Panc1 (cell line): ENCODE measurements at regions of chr11 and their contacts with region 1.

Region 1: DNA sequence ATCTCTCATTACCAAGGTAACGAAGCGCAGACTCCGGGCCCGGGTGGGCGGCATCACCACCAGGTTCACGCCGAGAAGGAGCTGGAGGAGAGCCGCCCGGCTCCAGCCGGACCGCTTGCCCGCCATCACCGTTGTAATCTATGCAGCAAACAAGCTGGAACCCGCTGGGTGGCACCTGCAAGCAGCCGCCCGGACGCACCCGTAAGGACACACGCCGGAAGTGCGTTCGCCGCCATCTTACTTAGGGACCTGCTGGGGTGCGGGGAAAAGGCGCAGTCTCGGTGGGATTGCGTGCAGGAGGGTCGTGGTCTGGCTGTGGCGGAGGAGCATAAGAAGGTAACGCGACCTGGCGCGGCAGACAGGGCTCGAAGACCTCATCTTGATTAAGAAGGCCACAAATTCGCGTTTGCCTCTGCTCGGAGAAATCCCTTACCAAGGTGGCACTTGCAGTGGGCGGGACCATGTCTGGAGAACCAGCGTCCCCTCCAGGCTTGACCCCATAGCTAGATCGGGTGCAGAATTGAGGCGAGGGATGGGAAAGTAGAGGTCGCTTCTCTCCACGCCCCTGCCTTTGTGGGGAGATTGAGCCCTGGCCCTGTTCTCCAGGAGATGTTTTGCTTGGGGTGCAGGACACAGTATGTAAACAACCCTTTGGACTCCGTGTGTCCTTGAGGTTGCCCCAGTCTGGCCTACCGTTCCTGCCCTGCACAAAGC is at the start of gene ACP2:
- DNase-seq: no peak
- ATAC-seq: peak; percentile 99
- H3K4me3 ChIP-seq: peak within 1 kb of the TSS; percentile 67 to 90
- H3K27ac ChIP-seq: peak within 1 kb of the TSS; percentile 97
- H3K4me1 ChIP-seq: peaks cover 14% of the 10 kb centered on the region
- H3K27me3 ChIP-seq: no peaks in the 10 kb centered on the region
- CTCF ChIP-seq: no peak; the same call in 1 of the 2 replicates
- total RNA-seq, gene ACP2: 28.4 TPM

Region 2: DNA sequence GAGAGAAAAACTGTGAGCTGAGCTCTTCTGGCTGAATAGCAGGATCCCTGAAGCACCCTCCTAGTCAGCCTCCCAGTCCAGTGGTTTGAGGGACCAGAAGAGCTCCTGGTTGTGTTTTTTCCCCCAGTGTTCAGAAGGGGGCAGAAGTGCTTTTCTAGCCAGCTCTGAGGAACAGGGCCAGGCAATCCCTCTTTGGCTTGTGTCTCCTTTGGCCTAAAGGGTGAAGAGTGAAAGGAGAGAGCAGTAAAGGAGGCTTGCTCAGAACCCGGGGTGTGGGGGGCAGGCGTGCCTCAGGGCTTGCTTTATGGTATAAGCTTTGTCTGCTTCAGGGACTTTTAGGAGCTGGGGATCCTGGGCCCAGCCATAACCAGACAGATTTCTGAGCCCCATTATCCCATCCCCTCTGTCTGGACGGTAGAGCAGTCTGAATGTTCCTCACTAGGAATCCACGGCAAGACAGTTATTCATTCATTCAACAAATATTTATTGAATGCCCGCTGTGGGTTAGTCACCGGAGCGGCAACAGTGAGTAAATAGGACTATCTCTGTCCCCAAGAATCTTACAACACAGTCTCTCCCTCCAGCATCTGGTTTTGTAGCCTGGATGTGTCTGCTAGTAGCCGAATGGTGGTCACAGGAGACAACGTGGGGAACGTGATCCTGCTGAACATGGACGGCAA is 14.7 kb before region 1 on chr11:
- CTCF ChIA-PET with region 1: interaction called, 4 read pairs
- POLR2A ChIA-PET with region 1: interaction called, 10 read pairs
- in situ Hi-C with region 1: no loop called
- intact Hi-C with region 1: no loop called
- DNase-seq: peak; percentile 86
- ATAC-seq: peak; percentile 84
- H3K4me3 ChIP-seq: peak overlapping the region; percentile 22 to 51
- H3K27ac ChIP-seq: peak overlapping the region; percentile 83
- H3K4me1 ChIP-seq: peaks cover 20% of the 10 kb centered on the region
- H3K27me3 ChIP-seq: no peaks in the 10 kb centered on the region
- CTCF ChIP-seq: peak; percentile 81; the same call in 1 of the 2 replicates

Region 3: GRCh38 chr11:47373876-47374720 is 125.3 kb after region 1 on chr11:
- CTCF ChIA-PET with region 1: no interaction called
- POLR2A ChIA-PET with region 1: no interaction called
- in situ Hi-C with region 1: no loop called
- intact Hi-C with region 1: no loop called
- DNase-seq: peak; percentile 33
- ATAC-seq: peak; percentile 95
- H3K4me3 ChIP-seq: no peak overlapping the region
- H3K27ac ChIP-seq: no peak overlapping the region
- H3K4me1 ChIP-seq: no peaks in the 10 kb centered on the region; the same call in 1 of the 2 replicates
- H3K27me3 ChIP-seq: no peaks in the 10 kb centered on the region
- CTCF ChIP-seq: peak; percentile 98